Activated naive CD8-positive, alpha-beta T cell treated with anti-CD3 and anti-CD28 coated beads, Interleukin-2, amount 10 ng/mL, durations not matched to agents 7 days and 5 days (primary cell): ENCODE measurements at regions of chr3 and their contacts with region 1.

Region 1: GRCh38 chr3:101849051-101849720 is at the start of gene NFKBIZ:
- DNase-seq: peak; percentile 92
- ATAC-seq: peak; percentile 84
- H3K4me3 Mint-ChIP-seq: peak within 1 kb of the TSS; percentile 88
- H3K27ac Mint-ChIP-seq: peak within 1 kb of the TSS; percentile 94
- H3K4me1 Mint-ChIP-seq: peaks cover 39% of the 10 kb centered on the region
- H3K27me3 Mint-ChIP-seq: no peaks in the 10 kb centered on the region
- total RNA-seq, gene NFKBIZ: 72.5 to 76.3 TPM

Region 2: DNA sequence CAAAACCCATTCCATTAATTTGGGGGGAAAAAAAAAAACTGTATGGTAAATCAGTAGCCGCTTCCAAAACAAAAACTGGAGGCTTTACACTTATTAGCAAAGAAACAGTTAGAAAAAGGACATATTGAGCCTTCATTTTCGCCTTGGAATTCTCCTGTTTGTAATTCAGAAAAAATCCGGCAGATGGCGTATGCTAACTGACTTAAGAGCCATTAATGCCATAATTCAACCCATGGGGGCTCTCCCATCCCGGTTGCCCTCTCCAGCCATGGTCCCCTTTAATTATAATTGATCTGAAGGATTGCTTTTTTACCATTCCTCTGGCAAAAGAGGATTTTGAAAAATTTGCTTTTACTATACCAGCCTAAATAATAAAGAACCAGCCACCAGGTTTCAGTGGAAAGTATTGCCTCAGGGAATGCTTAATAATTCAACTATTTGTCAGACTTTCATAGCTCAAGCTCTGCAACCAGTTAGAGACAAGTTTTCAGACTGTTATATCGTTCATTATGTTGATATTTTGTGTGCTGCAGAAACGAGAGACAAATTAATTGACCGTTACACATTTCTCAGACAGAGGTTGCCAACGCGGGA is 153.3 kb before region 1 on chr3:
- POLR2A ChIA-PET with region 1: no interaction called
- DNase-seq: no peak
- ATAC-seq: no peak
- H3K4me3 Mint-ChIP-seq: no peak overlapping the region
- H3K27ac Mint-ChIP-seq: no peak overlapping the region
- H3K4me1 Mint-ChIP-seq: peaks cover 5% of the 10 kb centered on the region
- H3K27me3 Mint-ChIP-seq: no peaks in the 10 kb centered on the region

Region 3: DNA sequence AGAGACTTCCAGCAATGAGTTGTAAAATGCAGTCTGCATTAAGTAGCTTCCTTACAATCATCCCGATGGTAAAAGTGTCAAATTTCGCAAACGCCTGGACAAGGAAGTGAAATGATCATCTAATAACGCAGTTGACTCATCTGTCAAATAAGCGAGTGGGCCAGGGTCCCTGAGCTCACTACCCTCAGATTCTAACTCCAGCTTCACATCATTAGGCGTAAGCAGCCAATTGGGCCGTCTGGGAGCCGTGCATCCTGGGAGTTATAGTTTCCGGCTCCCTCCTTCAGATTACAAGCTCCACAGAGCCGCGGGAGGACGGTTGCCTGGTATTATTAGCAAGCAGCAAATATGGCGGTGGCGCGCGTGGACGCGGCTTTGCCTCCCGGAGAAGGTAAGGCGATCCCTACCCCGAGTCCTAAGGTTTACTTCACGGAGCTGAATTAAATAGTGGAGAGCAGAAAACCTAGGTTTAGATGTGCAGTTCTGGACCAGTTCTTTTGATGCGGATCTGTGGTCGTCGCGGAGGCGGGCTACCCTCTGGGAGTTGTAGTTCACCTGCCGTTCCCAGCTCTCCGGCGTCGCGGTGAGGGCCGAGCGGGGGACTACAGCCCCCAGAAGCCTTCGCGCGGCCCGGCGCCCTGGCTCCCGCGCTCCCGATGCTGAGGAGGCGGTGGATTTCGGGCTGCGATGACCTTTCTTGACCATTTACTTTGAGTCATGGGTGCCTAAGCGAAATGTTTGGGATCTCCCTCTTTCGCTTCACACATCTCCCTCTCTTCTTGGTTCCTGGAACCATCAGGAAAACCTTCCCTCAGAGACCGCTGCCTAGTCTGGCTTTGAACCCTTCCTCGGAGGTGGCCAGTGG is 124.6 kb before region 1 on chr3 and contains the start of gene CEP97:
- POLR2A ChIA-PET with region 1: interaction called, 16 read pairs
- DNase-seq: peak; percentile 89
- ATAC-seq: peak; percentile 94
- H3K4me3 Mint-ChIP-seq: peak within 1 kb of the TSS; percentile 96
- H3K27ac Mint-ChIP-seq: peak within 1 kb of the TSS; percentile 94
- H3K4me1 Mint-ChIP-seq: peaks cover 29% of the 10 kb centered on the region
- H3K27me3 Mint-ChIP-seq: no peaks in the 10 kb centered on the region
- total RNA-seq, gene CEP97: 21.5 TPM

Region 4: GRCh38 chr3:101758224-101758623 is 91.0 kb before region 1 on chr3:
- POLR2A ChIA-PET with region 1: no interaction called
- DNase-seq: no peak
- ATAC-seq: no peak
- H3K4me3 Mint-ChIP-seq: no peak overlapping the region
- H3K27ac Mint-ChIP-seq: no peak overlapping the region
- H3K4me1 Mint-ChIP-seq: peaks cover 10% of the 10 kb centered on the region
- H3K27me3 Mint-ChIP-seq: no peaks in the 10 kb centered on the region

Region 5: GRCh38 chr3:101827211-101828174 is 21.7 kb before region 1 on chr3:
- POLR2A ChIA-PET with region 1: interaction called, 124 read pairs
- DNase-seq: peak; percentile 74
- ATAC-seq: peak; percentile 90
- H3K4me3 Mint-ChIP-seq: peak overlapping the region; percentile 89
- H3K27ac Mint-ChIP-seq: peak overlapping the region; percentile 95
- H3K4me1 Mint-ChIP-seq: peaks cover 39% of the 10 kb centered on the region
- H3K27me3 Mint-ChIP-seq: no peaks in the 10 kb centered on the region

Region 6: GRCh38 chr3:101936419-101937356 is 87.5 kb after region 1 on chr3:
- POLR2A ChIA-PET with region 1: interaction called, 23 read pairs
- DNase-seq: peak; percentile 39
- ATAC-seq: peak; percentile 91
- H3K4me3 Mint-ChIP-seq: peak overlapping the region; percentile 56
- H3K27ac Mint-ChIP-seq: peak overlapping the region; percentile 84
- H3K4me1 Mint-ChIP-seq: peaks cover 22% of the 10 kb centered on the region
- H3K27me3 Mint-ChIP-seq: no peaks in the 10 kb centered on the region

Region 7: DNA sequence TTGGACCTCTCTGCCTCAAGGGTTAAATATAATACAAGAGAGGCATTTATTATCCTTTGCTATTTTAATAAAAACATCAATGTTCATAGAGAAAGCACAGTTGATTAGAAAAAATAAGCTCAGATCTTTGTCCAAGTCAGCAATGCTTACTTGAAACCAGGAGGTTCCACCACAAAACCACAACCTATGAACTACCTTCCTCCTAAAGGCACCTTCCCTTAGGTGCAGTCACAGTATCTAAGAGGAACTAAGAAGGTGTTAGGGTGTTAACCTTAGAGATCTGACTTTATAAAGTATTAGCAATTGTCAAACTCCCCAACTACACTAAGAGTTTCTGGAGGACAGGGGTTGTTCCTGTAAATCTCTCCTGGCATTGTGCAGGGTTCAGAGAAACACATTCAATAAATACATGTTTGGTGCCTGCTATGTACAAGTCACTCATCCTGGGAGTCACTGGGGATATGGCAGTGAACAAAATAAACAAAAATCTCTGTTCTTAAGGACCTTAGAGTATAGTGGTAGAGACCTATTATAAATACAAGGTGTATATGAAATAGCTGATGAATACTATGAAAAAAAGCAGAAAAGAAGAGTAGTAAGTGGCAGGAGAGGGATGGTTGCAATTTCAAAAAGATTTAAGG is 208.7 kb after region 1 on chr3:
- POLR2A ChIA-PET with region 1: interaction called, 10 read pairs
- DNase-seq: no peak
- ATAC-seq: peak; percentile 86
- H3K4me3 Mint-ChIP-seq: peak overlapping the region; percentile 7
- H3K27ac Mint-ChIP-seq: peak overlapping the region; percentile 84
- H3K4me1 Mint-ChIP-seq: peaks cover 29% of the 10 kb centered on the region
- H3K27me3 Mint-ChIP-seq: no peaks in the 10 kb centered on the region

Region 8: GRCh38 chr3:102113411-102114041 is 264.3 kb after region 1 on chr3:
- POLR2A ChIA-PET with region 1: interaction called, 24 read pairs
- DNase-seq: peak; percentile 40
- ATAC-seq: peak; percentile 13
- H3K4me3 Mint-ChIP-seq: peak overlapping the region; percentile 50
- H3K27ac Mint-ChIP-seq: peak overlapping the region; percentile 77
- H3K4me1 Mint-ChIP-seq: peaks cover 29% of the 10 kb centered on the region
- H3K27me3 Mint-ChIP-seq: no peaks in the 10 kb centered on the region

Region 9: GRCh38 chr3:102225407-102226132 is 376.4 kb after region 1 on chr3:
- POLR2A ChIA-PET with region 1: interaction called, 19 read pairs
- DNase-seq: no peak
- ATAC-seq: peak; percentile 46
- H3K4me3 Mint-ChIP-seq: no peak overlapping the region
- H3K27ac Mint-ChIP-seq: no peak overlapping the region
- H3K4me1 Mint-ChIP-seq: peaks cover 29% of the 10 kb centered on the region
- H3K27me3 Mint-ChIP-seq: peaks cover 4% of the 10 kb centered on the region